Heart left ventricle (tissue), 16 donors: ENCODE measurements at regions of chr11 and their contacts with region 1.

Region 1: GRCh38 chr11:44775366-44775984 is 48.7 kb downstream of the TSPAN18 start:
- DNase-seq: peak; percentile 50 to 75 (median 71)
- ATAC-seq: peak; percentile 21 to 53 (median 45)
- H3K4me3 ChIP-seq: no peak overlapping the region
- H3K27ac ChIP-seq: peak overlapping the region in 11 of 12 donors; percentile 29 to 92 (median 76)
- H3K4me1 ChIP-seq: peaks cover 7 to 91% (median 65%) of the 10 kb centered on the region in 12 donors
- H3K27me3 ChIP-seq: no peaks in the 10 kb centered on the region
- CTCF ChIP-seq: peak; percentile 56 to 77 (median 66)
- POLR2A ChIP-seq: no peak

Region 2: DNA sequence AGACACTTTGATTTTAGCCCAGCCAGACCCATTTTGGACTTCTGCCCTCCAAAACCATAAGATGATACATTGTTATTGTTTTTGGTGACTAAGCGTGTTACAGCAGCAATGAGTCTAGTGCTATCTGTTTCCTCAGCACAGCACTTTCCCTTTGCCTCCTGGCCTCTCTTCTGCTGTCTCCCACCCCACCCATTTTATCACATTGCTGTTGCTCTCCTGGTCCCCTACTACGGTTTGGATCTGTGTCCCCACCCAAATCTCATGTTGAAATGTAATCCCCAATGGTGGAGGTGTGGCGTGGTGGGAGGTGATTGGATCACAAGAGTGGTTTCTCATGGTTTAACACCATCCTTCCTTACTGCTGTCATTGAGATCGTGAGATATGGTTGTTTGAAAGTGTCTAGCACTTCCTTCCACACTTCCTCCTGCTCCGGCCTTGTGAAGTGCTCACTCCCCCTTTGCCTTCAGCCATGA is 269.9 kb before region 1 on chr11:
- intact Hi-C with region 1: no loop called
- DNase-seq: no peak
- ATAC-seq: no peak
- H3K4me3 ChIP-seq: no peak overlapping the region
- H3K27ac ChIP-seq: no peak overlapping the region
- H3K4me1 ChIP-seq: no peaks in the 10 kb centered on the region
- H3K27me3 ChIP-seq: no peaks in the 10 kb centered on the region
- CTCF ChIP-seq: no peak
- POLR2A ChIP-seq: no peak

Region 3: GRCh38 chr11:44634401-44635281 is 140.8 kb before region 1 on chr11:
- intact Hi-C with region 1: loop called in 4 of 10 experiments (anchors 2 to 10 kb)
- DNase-seq: peak; percentile 79 to 92 (median 82)
- ATAC-seq: peak; percentile 72 to 88 (median 80)
- H3K4me3 ChIP-seq: peak overlapping the region in 2 of 12 donors; percentile 2 to 24
- H3K27ac ChIP-seq: peak overlapping the region in 2 of 12 donors; percentile 10 to 15
- H3K4me1 ChIP-seq: peaks cover 7 to 40% (median 29%) of the 10 kb centered on the region in 12 donors
- H3K27me3 ChIP-seq: no peaks in the 10 kb centered on the region
- CTCF ChIP-seq: peak in 1 of 12 donors; percentile 14
- POLR2A ChIP-seq: no peak

Region 4: GRCh38 chr11:44702889-44703288 is 72.6 kb before region 1 on chr11:
- intact Hi-C with region 1: loop called in 1 of 10 experiments (anchors 2 kb)
- DNase-seq: no peak
- ATAC-seq: peak; percentile 21 to 42 (median 24)
- H3K4me3 ChIP-seq: no peak overlapping the region
- H3K27ac ChIP-seq: peak overlapping the region in 4 of 12 donors; percentile 40 to 71 (median 58)
- H3K4me1 ChIP-seq: peaks cover 6 to 41% (median 17%) of the 10 kb centered on the region in 12 donors
- H3K27me3 ChIP-seq: no peaks in the 10 kb centered on the region
- CTCF ChIP-seq: no peak
- POLR2A ChIP-seq: no peak

Region 5: DNA sequence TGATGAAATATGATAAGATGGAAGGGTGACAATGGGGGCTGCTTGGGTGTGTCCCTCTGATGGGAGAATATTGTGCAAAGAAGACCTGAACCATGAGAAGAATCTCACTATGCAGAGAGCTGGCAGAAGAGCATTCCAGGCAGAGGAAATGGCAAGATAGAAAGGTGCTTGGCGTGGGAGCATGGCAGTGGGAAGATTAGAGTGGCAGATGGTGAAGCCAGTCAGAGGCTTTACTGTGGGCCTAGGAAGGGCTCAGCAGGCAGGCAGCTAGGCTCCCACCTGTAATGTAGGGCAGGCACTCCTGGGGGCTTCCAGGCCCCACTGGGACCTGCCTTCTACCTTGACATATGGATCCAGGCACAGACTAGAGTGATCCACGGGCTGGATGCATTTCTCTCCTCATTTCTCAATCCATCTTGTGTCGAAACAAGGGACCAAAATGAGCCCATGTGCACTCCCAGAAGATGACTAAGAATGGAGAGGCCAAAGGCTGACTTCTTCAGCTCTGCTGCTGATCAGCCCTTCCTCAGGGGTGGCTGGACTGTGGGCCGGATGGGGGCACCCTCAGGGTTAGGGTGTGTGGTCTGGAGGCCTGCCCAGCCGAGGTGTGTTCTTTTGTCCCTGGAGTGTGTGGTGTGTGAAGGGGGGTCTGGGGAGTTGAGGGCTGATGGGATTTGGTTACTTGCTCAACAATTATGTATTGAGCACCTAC is 39.6 kb after region 1 on chr11:
- intact Hi-C with region 1: loop called in 2 of 10 experiments (anchors 5 kb)
- DNase-seq: no peak
- ATAC-seq: peak in 1 of 4 donors; percentile 15
- H3K4me3 ChIP-seq: no peak overlapping the region
- H3K27ac ChIP-seq: peak overlapping the region in 7 of 12 donors; percentile 10 to 47 (median 36)
- H3K4me1 ChIP-seq: peaks cover 6 to 96% (median 74%) of the 10 kb centered on the region in 12 donors
- H3K27me3 ChIP-seq: no peaks in the 10 kb centered on the region
- CTCF ChIP-seq: no peak
- POLR2A ChIP-seq: no peak

Region 6: DNA sequence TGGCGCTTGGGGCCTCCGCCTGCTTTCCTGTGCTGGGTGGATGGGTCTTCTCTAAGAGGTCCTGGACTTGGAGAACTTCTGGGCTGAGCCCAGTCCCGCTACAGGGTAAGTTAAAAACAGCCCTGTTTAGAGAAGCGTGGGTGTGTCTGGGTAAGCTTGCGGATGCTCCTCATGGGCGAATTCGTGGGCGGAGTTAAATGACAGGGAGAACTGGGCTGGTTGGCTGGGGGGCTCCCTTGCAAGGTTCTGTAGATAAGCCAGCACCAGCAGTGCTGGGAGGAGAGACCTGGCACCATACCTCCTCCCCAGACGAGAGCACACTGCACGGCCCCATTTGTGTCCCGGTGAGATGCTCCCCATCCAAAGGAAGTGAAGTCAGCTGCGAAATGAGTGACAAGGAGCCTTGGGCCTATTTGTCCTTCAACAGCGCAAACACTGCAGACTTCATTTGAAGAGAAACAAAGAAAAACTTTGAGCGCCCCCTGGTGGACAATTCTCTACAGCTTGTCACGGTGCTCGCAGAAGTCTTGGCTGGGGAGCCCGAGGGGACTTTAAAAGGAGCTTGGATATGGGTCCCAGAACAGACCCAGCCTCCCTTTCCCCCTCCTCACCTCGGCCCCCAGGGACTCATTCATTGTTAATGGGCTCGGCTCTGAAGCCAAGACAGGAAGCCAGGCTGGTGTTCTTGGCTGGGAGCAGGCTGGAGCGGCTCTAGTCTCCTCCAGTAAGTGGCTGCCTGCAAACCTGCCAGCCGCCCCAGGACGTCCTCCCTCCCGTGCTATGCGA is 135.7 kb after region 1 on chr11:
- intact Hi-C with region 1: loop called in 2 of 10 experiments (anchors 2 to 5 kb)
- DNase-seq: peak; percentile 81 to 91 (median 89)
- ATAC-seq: peak; percentile 67 to 82 (median 71)
- H3K4me3 ChIP-seq: peak overlapping the region in 3 of 12 donors; percentile 8 to 29 (median 8)
- H3K27ac ChIP-seq: peak overlapping the region in 7 of 12 donors; percentile 6 to 58 (median 31)
- H3K4me1 ChIP-seq: peaks cover 0 to 47% (median 26%) of the 10 kb centered on the region in 12 donors
- H3K27me3 ChIP-seq: no peaks in the 10 kb centered on the region
- CTCF ChIP-seq: peak; percentile 84 to 96 (median 90)
- POLR2A ChIP-seq: no peak

Region 7: DNA sequence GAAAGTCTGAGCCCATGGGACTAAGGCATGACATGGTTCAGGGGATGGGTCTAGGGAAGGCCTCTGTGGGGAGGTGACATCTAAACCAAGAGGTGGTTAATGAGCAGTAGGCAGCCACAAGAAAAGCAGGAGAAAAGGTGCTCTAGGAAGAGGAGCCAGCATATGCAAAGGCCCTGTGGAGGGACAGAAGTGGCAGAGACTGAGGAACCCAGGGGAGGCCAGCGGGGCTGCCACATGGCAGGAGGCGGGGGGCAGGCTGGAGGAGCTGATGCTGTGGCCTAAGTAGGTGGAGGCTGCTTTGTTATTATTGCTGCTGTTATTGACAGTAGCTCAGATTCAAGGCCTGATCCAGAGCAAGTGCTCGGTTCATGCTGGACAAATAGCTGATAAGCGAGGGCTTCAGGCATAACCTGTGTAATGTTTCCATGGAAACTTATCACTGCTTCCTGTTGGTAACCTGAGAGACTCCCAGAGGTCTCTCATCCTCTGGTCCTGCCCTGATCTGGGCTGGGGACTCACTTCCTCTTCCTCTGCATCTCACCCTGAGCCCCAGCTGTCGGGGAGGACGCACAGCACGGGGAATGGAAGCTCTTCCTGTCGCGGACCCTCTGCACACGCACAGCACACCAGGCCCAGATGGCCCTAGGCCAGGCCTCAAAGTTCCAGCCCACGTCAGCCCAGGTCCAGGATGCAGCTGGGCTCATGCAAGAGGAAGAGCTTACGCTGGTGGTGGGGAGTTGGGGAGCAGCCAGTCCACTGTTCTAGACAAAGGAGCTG is 250.4 kb after region 1 on chr11:
- intact Hi-C with region 1: no loop called
- DNase-seq: peak; percentile 66 to 88 (median 87)
- ATAC-seq: peak; percentile 64 to 93 (median 70)
- H3K4me3 ChIP-seq: no peak overlapping the region
- H3K27ac ChIP-seq: peak overlapping the region in 10 of 12 donors; percentile 16 to 85 (median 68)
- H3K4me1 ChIP-seq: peaks cover 10 to 66% (median 38%) of the 10 kb centered on the region in 12 donors
- H3K27me3 ChIP-seq: no peaks in the 10 kb centered on the region
- CTCF ChIP-seq: no peak
- POLR2A ChIP-seq: no peak